HEK293 (cell line): ENCODE measurements at regions of chr15 and their contacts with region 1.

Region 1: DNA sequence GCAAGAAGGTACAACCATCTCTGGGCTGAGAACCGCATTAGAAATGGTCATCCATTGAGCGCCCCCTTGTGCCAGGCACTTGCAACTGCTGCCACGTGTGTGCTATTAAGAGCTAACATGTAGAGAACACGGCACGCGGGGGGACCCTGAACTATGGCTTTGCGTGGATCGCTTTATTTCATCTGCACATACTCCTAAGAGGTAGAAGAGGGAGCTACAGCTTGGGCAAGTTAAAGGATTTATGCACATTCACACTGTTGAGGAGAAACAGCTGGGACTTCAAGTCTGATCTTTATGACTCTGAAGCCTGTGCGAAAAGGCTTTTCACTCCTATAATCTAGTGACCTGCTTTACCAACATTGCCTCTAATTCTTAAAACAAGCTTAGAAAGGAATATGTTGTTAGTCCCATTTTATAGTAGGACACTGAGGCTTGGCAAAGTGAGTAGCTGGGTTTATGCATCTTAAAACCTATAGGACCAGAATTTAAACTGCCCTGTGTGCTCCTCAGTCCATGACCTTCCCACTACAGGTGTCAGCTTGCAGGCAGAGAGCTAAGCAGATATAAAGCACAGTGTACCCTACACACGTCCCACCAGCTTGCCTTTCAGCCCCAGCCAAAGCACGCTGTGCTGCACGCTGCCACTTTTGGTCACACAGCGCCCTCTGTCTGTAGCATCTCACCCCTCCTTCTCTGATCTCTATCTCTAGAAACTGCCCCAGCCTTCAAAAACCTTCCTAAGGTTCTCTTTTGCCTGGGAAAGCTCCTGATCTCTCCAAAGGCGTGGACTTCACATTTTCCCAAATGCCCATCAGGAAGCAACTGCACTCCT is 57.8 kb downstream of the STARD5 start:
- H3K4me3 ChIP-seq: peak overlapping the region; percentile 4; the same call in 1 of the 2 replicates
- H3K27ac ChIP-seq: no peak overlapping the region
- H3K4me1 ChIP-seq: no peaks in the 10 kb centered on the region
- CTCF ChIP-seq: peak; percentile 86

Region 2: DNA sequence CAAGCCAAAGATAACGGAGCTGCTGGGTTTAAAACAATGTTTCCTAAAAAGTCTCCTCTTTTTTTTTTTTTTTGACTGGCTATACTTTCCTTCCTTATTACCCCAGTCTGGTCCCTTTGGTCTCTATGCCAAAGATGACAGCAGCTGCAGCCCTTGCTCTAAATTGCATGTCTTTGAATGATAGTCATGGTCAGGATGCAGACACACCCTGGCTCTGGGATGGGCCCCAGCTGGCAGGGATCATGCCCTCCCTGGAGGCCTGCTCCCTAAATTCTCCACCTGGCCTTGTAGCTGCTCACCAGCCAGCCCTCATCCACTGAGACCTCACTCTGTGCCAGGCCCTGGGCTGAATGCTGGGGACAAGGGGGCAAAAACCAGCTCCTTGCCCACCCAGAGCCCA is 372.4 kb before region 1 on chr15:
- CTCF ChIA-PET with region 1: no interaction called
- POLR2A ChIA-PET with region 1: no interaction called
- H3K4me3 ChIP-seq: no peak overlapping the region
- H3K27ac ChIP-seq: no peak overlapping the region
- H3K4me1 ChIP-seq: no peaks in the 10 kb centered on the region
- CTCF ChIP-seq: no peak

Region 3: GRCh38 chr15:80977627-80978036 is 288.5 kb before region 1 on chr15:
- CTCF ChIA-PET with region 1: interaction called, 162 read pairs
- POLR2A ChIA-PET with region 1: interaction called, 5 read pairs
- H3K4me3 ChIP-seq: no peak overlapping the region
- H3K27ac ChIP-seq: no peak overlapping the region
- H3K4me1 ChIP-seq: peaks cover 14% of the 10 kb centered on the region
- CTCF ChIP-seq: peak; percentile 81

Region 4: DNA sequence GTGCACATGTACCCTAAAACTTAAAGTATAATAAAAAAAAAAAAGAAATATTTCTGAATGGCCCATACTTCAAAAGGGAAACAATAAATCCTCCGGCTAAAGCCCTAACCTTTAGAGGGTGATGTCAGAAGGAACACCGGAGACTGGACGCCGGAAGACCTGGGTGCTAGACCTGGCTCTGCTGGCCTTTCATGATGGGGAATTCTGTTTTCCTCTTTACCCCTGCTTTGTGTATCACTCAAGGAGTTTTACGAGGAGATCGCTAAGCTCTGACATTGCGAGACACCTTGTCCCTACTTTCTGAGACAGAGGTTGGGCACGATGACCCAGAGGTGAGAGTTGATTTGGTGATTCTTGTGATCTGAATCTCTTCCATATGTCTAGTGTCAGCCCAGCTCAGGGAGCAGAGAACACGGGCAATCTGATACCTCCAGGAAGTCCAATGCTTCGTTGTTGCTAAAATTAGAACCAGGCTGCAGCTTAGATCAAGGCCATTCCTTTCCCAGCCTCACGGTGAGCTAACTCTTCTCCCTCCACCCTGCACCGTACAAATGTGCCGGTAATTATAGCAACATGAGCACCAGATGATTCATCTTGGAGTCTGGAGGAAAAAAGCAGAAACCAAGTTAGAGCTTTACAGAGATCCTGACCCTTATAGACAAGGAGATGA is 174.1 kb before region 1 on chr15:
- CTCF ChIA-PET with region 1: interaction called, 31 read pairs
- POLR2A ChIA-PET with region 1: no interaction called
- H3K4me3 ChIP-seq: no peak overlapping the region
- H3K27ac ChIP-seq: peak overlapping the region; percentile 21; the same call in 1 of the 2 replicates
- H3K4me1 ChIP-seq: peaks cover 6% of the 10 kb centered on the region
- CTCF ChIP-seq: no peak

Region 5: GRCh38 chr15:81155375-81156218 is 110.6 kb before region 1 on chr15:
- CTCF ChIA-PET with region 1: interaction called, 201 read pairs
- POLR2A ChIA-PET with region 1: interaction called, 6 read pairs
- H3K4me3 ChIP-seq: no peak overlapping the region
- H3K27ac ChIP-seq: no peak overlapping the region
- H3K4me1 ChIP-seq: no peaks in the 10 kb centered on the region
- CTCF ChIP-seq: peak; percentile 27; the same call in 1 of the 2 replicates

Region 6: GRCh38 chr15:81225161-81225671 is 40.9 kb before region 1 on chr15:
- CTCF ChIA-PET with region 1: interaction called, 29 read pairs
- POLR2A ChIA-PET with region 1: no interaction called
- H3K4me3 ChIP-seq: no peak overlapping the region
- H3K27ac ChIP-seq: no peak overlapping the region
- H3K4me1 ChIP-seq: no peaks in the 10 kb centered on the region
- CTCF ChIP-seq: no peak

Region 7: DNA sequence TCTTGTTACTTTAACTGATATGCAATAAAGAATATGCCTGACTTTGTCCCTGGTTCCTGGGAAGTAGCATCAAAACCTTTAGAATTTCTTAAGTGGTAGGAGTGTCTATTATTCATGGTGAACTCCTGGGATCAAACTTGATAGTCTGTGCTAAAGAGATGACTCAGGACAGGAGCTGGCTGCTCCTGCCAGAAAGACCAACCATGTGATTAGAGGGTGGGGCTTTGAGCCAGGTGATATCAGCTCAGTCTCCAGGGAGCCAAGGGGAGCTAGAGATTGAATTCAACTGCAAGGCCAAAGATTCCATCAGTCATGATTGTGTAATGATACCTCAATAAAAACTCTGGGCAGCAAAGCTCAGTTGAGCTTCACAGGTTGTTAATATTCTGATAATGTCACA is 128.4 kb after region 1 on chr15:
- CTCF ChIA-PET with region 1: interaction called, 199 read pairs
- POLR2A ChIA-PET with region 1: no interaction called
- H3K4me3 ChIP-seq: no peak overlapping the region
- H3K27ac ChIP-seq: no peak overlapping the region
- H3K4me1 ChIP-seq: no peaks in the 10 kb centered on the region
- CTCF ChIP-seq: no peak

Region 8: GRCh38 chr15:81466741-81467140 is 200.6 kb after region 1 on chr15:
- CTCF ChIA-PET with region 1: no interaction called
- POLR2A ChIA-PET with region 1: no interaction called
- H3K4me3 ChIP-seq: no peak overlapping the region
- H3K27ac ChIP-seq: no peak overlapping the region
- H3K4me1 ChIP-seq: no peaks in the 10 kb centered on the region
- CTCF ChIP-seq: no peak

Region 9: DNA sequence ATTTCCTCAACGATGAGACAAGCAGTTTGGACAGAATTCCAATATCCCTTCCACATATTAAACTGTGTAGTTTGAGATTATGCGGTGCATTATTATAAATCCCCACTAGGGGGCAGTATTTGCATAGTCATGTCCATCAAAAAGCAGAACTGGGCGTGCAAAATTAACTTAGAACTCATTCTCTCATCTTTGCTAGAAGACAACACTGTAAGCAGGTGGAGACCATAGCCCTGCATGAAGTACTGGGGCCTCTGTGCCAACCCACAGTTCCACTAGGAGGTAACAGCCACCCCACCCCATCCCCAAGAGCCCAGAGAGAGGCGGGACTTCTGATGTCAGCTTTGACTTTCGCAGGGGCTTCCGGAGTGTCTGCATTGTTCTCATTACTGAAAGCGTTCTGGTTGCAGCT is 214.5 kb after region 1 on chr15:
- CTCF ChIA-PET with region 1: no interaction called
- POLR2A ChIA-PET with region 1: no interaction called
- H3K4me3 ChIP-seq: no peak overlapping the region
- H3K27ac ChIP-seq: no peak overlapping the region
- H3K4me1 ChIP-seq: no peaks in the 10 kb centered on the region
- CTCF ChIP-seq: peak; percentile 55; the same call in 1 of the 2 replicates